Psoas muscle (tissue), 8 donors: ENCODE measurements at regions of chr5 and their contacts with region 1.

Region 1: GRCh38 chr5:61331407-61332357 is at the start of gene ZSWIM6:
- DNase-seq: peak; percentile 99 to 100
- ATAC-seq: peak; percentile 92 to 96 (median 93)
- H3K4me3 ChIP-seq: peak within 1 kb of the TSS; percentile 96
- H3K27ac ChIP-seq: peak within 1 kb of the TSS; percentile 83
- H3K4me1 ChIP-seq: peaks cover 19% of the 10 kb centered on the region
- H3K27me3 ChIP-seq: no peaks in the 10 kb centered on the region
- CTCF ChIP-seq: no peak
- total RNA-seq, gene ZSWIM6: 2.4 to 6.3 (median 4.2) TPM

Region 2: GRCh38 chr5:60959156-60959555 is 372.5 kb before region 1 on chr5:
- intact Hi-C with region 1: loop called in 1 of 2 experiments (anchors 10 kb)
- DNase-seq: no peak
- ATAC-seq: no peak
- H3K4me3 ChIP-seq: no peak overlapping the region
- H3K27ac ChIP-seq: no peak overlapping the region
- H3K4me1 ChIP-seq: peaks cover 22% of the 10 kb centered on the region
- H3K27me3 ChIP-seq: no peaks in the 10 kb centered on the region
- CTCF ChIP-seq: peak; percentile 30

Region 3: DNA sequence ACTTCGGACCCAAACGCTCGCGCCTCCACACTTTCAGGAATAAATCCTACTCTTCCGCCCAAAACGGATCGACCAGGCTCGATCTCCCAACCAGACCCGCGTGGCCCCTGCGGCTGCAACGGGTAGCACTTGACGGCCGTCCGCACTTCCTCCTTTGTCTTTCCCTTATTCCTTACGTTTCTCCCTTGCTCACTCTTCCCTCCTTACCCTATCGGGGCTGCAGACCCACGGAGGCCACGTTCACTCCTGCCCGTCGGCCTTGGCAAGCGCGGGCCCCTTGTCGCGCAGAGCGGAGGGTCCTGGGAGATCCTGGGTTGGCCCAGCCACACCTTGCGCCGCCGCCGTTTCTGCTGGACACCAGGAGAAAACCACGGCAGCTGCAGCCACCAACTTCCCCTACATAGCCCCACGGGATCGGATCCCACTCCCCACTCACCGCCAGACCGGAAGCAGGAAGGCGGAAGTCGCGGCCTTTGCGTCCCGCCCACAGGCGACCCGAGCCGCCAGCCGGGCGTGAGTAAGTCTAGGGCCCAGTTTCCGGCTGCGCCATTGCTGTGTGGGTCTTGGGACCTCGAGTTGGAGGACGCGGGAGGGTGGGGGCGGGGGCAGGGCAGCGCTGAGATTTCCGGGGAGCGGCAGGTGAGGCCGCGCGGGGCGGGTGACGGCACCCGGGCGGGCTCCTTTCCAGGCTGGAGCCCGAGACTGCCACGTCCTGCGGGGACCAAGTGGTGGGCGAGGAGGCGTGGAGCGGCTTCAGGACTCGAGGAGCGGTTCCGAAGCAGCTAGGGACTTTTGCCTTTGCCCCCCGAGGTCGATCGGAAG is 169.5 kb before region 1 on chr5 and contains the start of gene SMIM15:
- intact Hi-C with region 1: loop called (anchors 2 to 5 kb)
- DNase-seq: peak; percentile 90 to 94
- ATAC-seq: peak; percentile 96 to 99 (median 98)
- H3K4me3 ChIP-seq: peak within 1 kb of the TSS; percentile 82
- H3K27ac ChIP-seq: peak within 1 kb of the TSS; percentile 91
- H3K4me1 ChIP-seq: peaks cover 15% of the 10 kb centered on the region
- H3K27me3 ChIP-seq: no peaks in the 10 kb centered on the region
- CTCF ChIP-seq: no peak
- total RNA-seq, gene SMIM15: 10.6 to 19.3 (median 14.5) TPM

Region 4: DNA sequence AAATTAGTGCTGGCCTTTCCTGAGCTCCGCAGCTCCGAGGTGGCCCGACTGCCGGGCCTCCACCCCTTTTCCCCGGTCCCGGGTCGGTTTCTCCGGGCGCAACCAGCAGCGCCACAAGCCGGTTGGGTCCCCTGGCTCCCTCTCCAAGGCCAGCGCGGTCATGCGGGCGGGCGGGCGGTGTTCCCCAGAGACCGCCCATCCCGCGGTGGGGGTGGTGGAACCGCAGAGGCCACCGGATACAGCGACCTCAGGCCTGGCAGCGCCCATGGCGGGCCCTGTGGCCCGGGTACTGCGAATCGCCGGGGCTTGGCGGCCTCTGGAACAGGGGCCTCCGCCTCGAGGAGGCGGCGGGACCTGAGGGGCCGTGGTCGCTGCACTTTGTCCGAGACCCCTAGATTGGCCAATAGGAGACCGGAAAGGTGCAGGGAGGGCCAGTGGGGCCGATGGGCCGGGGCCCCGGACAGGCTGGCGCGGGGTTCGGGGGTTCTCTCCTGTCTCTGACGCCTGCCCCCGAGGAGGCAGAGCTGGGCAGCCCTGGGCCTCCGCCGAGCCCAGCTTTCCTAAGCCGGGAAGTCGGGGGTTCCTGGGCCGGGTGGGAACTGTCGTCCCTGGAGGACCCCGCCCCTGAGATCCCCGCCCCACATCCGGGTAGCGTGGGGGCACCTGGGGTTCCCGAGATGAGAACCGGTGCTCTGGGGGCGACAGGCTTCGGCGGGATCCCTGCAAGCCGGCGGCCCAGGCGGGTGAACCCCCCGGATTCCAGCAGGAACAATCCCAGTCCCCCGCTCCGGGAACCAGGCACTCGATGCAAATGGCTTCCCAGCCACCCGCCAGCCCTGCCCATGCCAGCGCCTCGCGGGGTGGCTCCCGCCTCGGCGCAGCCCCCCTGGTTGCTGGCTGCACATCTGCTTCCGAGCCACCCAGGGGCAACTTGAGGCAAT is 294.3 kb after region 1 on chr5:
- intact Hi-C with region 1: loop called in 1 of 2 experiments (anchors 10 kb)
- DNase-seq: peak; percentile 75 to 87
- ATAC-seq: peak; percentile 83 to 95 (median 92)
- H3K4me3 ChIP-seq: peak overlapping the region; percentile 66
- H3K27ac ChIP-seq: peak overlapping the region; percentile 39
- H3K4me1 ChIP-seq: peaks cover 8% of the 10 kb centered on the region
- H3K27me3 ChIP-seq: no peaks in the 10 kb centered on the region
- CTCF ChIP-seq: no peak

Region 5: DNA sequence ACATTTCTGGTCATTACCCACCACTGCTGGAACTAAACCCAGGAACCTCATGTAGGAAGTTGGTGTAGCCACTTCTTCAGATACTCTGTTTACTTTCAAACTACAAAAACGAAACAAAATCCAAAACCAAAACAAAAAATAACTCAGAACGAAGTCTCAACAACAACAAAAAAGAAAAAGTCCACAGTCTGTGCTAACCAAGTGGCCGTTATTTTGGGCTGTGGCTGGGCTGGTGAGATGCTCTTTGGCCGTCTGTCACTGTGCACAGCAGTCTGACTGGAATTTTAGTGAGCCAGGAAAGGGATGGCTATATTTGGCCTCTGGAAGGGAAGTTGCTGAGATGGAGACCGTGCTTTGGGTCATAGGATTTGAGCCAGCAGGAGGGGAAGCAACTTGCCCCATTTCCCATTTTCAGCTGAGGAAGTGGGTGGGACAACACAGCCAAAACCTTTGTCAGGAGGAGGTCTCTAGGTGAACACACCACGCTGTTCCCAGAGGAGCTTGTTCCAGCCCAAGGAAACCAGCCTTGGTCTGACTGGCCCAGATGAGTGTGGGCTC is 334.5 kb after region 1 on chr5:
- intact Hi-C with region 1: loop called in 1 of 2 experiments (anchors 10 kb)
- DNase-seq: no peak
- ATAC-seq: no peak
- H3K4me3 ChIP-seq: no peak overlapping the region
- H3K27ac ChIP-seq: no peak overlapping the region
- H3K4me1 ChIP-seq: no peaks in the 10 kb centered on the region
- H3K27me3 ChIP-seq: no peaks in the 10 kb centered on the region
- CTCF ChIP-seq: no peak